Mammary epithelial cell (primary cell): ENCODE measurements at regions of chr18 and their contacts with region 1.

Region 1: GRCh38 chr18:74597662-74598349 is at the start of gene ZNF407:
- DNase-seq: peak; percentile 91
- H3K4me3 ChIP-seq: peak within 1 kb of the TSS; percentile 92 to 98 (median 92)
- H3K27ac ChIP-seq: peak within 1 kb of the TSS; percentile 94
- H3K4me1 ChIP-seq: peaks cover 14% of the 10 kb centered on the region
- H3K27me3 ChIP-seq: no peaks in the 10 kb centered on the region
- CTCF ChIP-seq: no peak
- total RNA-seq, gene ZNF407: 10.8 to 12.8 TPM

Region 2: DNA sequence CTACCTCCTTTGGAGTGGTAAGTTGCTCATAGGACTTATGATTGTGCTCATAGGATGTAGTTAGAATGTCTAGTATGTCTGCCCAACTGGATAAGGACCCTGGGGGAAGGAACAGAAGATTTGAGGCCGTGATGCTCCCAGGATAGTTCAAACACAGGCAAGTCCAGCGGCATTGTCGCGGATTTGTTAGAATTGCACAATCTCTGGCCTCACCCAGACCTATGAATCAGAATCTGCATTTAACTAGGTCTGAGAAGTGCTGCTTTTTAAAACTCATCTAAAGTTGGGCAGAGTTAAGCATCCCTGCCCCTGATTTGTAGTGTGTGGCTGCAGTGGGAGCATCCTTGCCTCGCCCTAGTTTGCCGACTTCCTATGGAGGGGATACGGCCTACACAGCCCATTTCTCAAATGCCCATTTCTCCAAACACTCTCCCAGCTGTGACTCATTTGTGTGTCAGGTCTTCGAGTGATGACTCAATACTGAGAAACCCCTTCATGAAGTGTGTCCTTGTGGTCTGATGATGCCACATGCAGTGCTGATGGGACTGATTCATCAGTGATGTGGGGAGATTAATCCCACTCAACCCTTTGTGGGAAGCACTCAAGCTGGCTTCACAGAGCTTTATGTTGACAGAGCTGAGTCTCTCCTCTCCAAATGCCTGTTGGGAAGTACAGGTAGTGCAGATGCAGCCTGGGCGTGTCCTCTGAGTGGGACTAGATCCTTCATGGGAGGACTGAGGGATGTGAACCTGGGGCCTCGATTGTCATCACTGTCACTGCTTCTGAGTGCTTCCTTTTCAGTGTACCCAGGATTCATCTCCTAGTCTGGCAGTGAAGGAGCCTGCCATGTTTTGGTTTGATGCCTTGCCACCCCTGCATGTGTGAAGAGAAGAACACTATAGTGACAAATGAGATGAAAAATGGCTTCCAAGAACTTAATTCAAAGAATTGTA is 811.0 kb after region 1 on chr18:
- CTCF ChIA-PET with region 1: no interaction called
- dilution Hi-C with region 1: no loop called
- in situ Hi-C with region 1: no loop called
- intact Hi-C with region 1: loop called (anchors 5 kb)
- DNase-seq: peak; percentile 100
- H3K4me3 ChIP-seq: no peak overlapping the region
- H3K27ac ChIP-seq: peak overlapping the region; percentile 76
- H3K4me1 ChIP-seq: peaks cover 29% of the 10 kb centered on the region
- H3K27me3 ChIP-seq: no peaks in the 10 kb centered on the region
- CTCF ChIP-seq: no peak